HAP-1 (cell line): ENCODE measurements at regions of chr10 and their contacts with region 1.

Region 1: GRCh38 chr10:93235686-93236085 is 162.0 kb downstream of the CYP26A1 start:
- DNase-seq: no peak
- H3K4me3 ChIP-seq: no peak overlapping the region
- H3K4me1 ChIP-seq: peaks cover 14% of the 10 kb centered on the region
- H3K27me3 ChIP-seq: no peaks in the 10 kb centered on the region

Region 2: DNA sequence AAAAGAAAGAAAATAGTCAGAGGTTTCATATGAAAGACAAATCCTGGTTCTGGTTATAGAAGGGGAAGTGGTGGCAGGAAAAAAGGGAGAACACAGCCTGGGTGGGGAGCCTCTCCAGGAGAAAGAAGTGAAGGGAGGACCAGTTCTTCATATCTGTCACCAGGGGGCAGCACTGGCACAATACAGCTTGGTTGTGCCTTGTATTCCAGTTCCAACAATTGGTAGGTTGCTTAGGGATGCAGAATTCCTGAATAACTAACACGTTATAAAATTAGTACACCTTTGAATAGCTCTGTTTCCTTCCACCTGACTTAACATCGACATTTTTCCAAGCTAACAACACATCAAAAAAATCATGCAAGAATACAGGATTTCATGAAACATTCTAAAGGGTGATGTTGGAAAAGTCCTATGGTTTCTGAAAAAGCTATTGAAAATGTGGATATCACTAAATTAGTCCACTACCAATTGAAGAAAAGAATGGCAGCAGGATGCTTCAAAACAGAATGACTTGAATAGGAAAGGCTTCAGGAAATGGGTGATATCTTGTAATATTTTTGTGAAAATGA is 109.1 kb before region 1 on chr10:
- in situ Hi-C with region 1: no loop called
- DNase-seq: peak in 1 of 2 experiments; percentile 34
- H3K4me3 ChIP-seq: no peak overlapping the region
- H3K4me1 ChIP-seq: no peaks in the 10 kb centered on the region
- H3K27me3 ChIP-seq: no peaks in the 10 kb centered on the region; the same call in 1 of the 2 replicates

Region 3: GRCh38 chr10:93280699-93281366 is 45.1 kb after region 1 on chr10:
- in situ Hi-C with region 1: loop called (anchors 5 kb)
- DNase-seq: peak; percentile 86 to 100
- H3K4me3 ChIP-seq: no peak overlapping the region
- H3K4me1 ChIP-seq: peaks cover 31% of the 10 kb centered on the region
- H3K27me3 ChIP-seq: no peaks in the 10 kb centered on the region